Stomach (tissue), 19 donors: ENCODE measurements at regions of chr10 and their contacts with region 1.

Region 1: GRCh38 chr10:44857363-44858016 is 53.6 kb upstream of the TMEM72 start:
- DNase-seq: peak; percentile 66 to 84
- H3K4me3 ChIP-seq: no peak overlapping the region
- H3K27ac ChIP-seq: no peak overlapping the region
- H3K4me1 ChIP-seq: peaks cover 0 to 4% (median 1%) of the 10 kb centered on the region in 4 donors
- H3K27me3 ChIP-seq: peaks cover 0 to 6% (median 0%) of the 10 kb centered on the region in 3 donors
- CTCF ChIP-seq: peak in 5 of 7 experiments; percentile 80 to 98 (median 96)
- EP300 ChIP-seq: no peak
- POLR2A ChIP-seq: no peak

Region 2: DNA sequence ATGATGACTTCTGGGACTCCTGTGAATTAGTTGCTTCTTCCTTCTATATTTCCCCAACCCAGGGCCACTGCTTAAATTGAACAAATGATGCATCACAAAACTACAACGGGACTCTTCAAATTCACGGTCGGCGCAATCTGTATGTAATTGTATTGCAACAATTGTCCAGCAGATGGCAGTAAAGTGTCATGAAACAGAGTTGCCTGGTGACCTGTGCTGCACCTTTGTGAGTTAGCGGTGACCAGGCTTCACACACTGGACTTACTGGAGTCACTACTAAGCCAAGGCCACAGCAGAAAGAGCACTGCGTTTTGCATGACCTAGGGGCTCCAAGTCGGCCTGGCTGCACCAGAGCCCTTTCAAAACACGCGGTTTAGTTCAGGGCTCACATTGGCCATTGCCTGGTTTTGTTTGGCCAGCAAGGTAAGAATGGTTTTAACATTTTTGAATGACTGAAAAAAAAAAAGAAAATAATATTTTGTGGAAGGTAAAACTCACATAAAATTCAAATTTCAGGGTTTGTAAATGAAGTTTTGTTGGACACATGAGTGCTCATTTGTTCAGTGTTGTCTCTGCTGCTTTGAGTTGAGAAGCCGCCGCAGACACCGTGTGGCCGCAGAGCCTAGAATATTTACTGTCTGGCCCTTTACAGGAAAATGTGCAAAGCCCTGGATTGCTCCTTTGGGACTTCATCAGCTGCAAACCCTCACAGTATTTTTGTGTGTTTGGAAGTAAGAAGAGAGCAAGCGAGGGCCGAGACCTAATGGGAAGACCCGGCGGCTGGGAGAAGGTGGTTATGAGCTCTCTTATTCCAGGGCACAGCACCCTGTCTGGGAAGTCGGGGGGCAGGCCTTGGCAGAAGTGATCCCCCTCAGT is 1185.6 kb before region 1 on chr10:
- intact Hi-C with region 1: loop called (anchors 5 kb)
- DNase-seq: peak; percentile 60 to 86
- H3K4me3 ChIP-seq: no peak overlapping the region
- H3K27ac ChIP-seq: no peak overlapping the region
- H3K4me1 ChIP-seq: peaks cover 0 to 20% (median 11%) of the 10 kb centered on the region in 4 donors
- H3K27me3 ChIP-seq: peaks cover 5 to 44% (median 11%) of the 10 kb centered on the region in 3 donors
- CTCF ChIP-seq: peak in 5 of 7 experiments; percentile 64 to 90 (median 82)
- EP300 ChIP-seq: no peak
- POLR2A ChIP-seq: no peak

Region 3: GRCh38 chr10:44398747-44399658 is 458.5 kb before region 1 on chr10:
- intact Hi-C with region 1: loop called (anchors 10 kb)
- DNase-seq: no peak
- H3K4me3 ChIP-seq: no peak overlapping the region
- H3K27ac ChIP-seq: no peak overlapping the region
- H3K4me1 ChIP-seq: no peaks in the 10 kb centered on the region
- H3K27me3 ChIP-seq: peaks cover 0 to 41% (median 0%) of the 10 kb centered on the region in 3 donors
- CTCF ChIP-seq: no peak
- EP300 ChIP-seq: no peak
- POLR2A ChIP-seq: no peak

Region 4: DNA sequence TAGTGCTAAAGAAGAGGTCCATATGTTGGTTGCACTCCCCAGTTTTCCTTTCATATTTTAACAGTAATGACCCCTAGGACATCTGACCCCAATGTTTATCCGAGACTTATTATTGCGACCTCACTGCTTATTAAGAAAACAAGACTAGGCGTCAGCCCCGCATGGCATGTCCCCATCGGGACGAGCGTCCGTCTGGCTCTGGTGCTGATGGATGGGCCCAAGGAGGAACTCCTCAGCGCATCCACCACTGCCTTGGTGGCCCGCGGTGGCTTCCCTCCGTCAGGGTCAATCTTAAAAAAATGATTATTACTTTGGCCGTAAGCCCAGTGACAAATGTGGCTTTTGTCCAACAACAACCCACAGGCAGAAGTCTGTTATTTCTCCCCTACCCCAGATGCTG is 432.5 kb before region 1 on chr10:
- intact Hi-C with region 1: no loop called
- DNase-seq: no peak
- H3K4me3 ChIP-seq: no peak overlapping the region
- H3K27ac ChIP-seq: no peak overlapping the region
- H3K4me1 ChIP-seq: no peaks in the 10 kb centered on the region
- H3K27me3 ChIP-seq: no peaks in the 10 kb centered on the region
- CTCF ChIP-seq: no peak
- EP300 ChIP-seq: no peak
- POLR2A ChIP-seq: no peak

Region 5: GRCh38 chr10:45023426-45023825 is 165.9 kb after region 1 on chr10:
- intact Hi-C with region 1: no loop called
- DNase-seq: no peak
- H3K4me3 ChIP-seq: no peak overlapping the region
- H3K27ac ChIP-seq: no peak overlapping the region
- H3K4me1 ChIP-seq: no peaks in the 10 kb centered on the region
- H3K27me3 ChIP-seq: no peaks in the 10 kb centered on the region
- CTCF ChIP-seq: no peak
- EP300 ChIP-seq: no peak
- POLR2A ChIP-seq: no peak